Kidney (tissue), 22 donors: ENCODE measurements at regions of chr3 and their contacts with region 1.

Region 1: GRCh38 chr3:46909535-46910442 is 32.3 kb downstream of the PTH1R start:
- DNase-seq: peak; percentile 94 to 97 (median 95)
- H3K4me3 ChIP-seq: no peak overlapping the region
- H3K27ac ChIP-seq: no peak overlapping the region
- H3K4me1 ChIP-seq: peaks cover 0 to 24% (median 8%) of the 10 kb centered on the region in 3 donors
- H3K27me3 ChIP-seq: no peaks in the 10 kb centered on the region
- CTCF ChIP-seq: peak; percentile 90

Region 2: GRCh38 chr3:46705022-46705530 is 204.7 kb before region 1 on chr3:
- intact Hi-C with region 1: loop called (anchors 5 kb)
- DNase-seq: peak; percentile 80 to 87 (median 82)
- H3K4me3 ChIP-seq: no peak overlapping the region
- H3K27ac ChIP-seq: no peak overlapping the region
- H3K4me1 ChIP-seq: peaks cover 0 to 10% (median 8%) of the 10 kb centered on the region in 3 donors
- H3K27me3 ChIP-seq: no peaks in the 10 kb centered on the region
- CTCF ChIP-seq: peak; percentile 98